AG04449 (cell line): ENCODE measurements at regions of chr11 and their contacts with region 1.

Region 1: GRCh38 chr11:19076744-19077589 is 16.4 kb upstream of the MRGPRX2 start:
- DNase-seq: no peak
- H3K4me3 ChIP-seq: no peak overlapping the region
- CTCF ChIP-seq: peak; percentile 89

Region 2: GRCh38 chr11:19087658-19088057 is 10.7 kb after region 1 on chr11:
- CTCF ChIA-PET with region 1: interaction called, 42 read pairs
- POLR2A ChIA-PET with region 1: no interaction called
- DNase-seq: peak; percentile 46
- H3K4me3 ChIP-seq: no peak overlapping the region
- CTCF ChIP-seq: no peak

Region 3: GRCh38 chr11:19093976-19094375 is 17.0 kb after region 1 on chr11:
- CTCF ChIA-PET with region 1: interaction called, 25 read pairs
- POLR2A ChIA-PET with region 1: no interaction called
- DNase-seq: peak; percentile 19
- H3K4me3 ChIP-seq: no peak overlapping the region
- CTCF ChIP-seq: no peak

Region 4: GRCh38 chr11:19116971-19117750 is 40.2 kb after region 1 on chr11 and contains the start of gene ZDHHC13:
- CTCF ChIA-PET with region 1: interaction called, 23 read pairs
- POLR2A ChIA-PET with region 1: interaction called, 3 read pairs
- DNase-seq: peak; percentile 17
- H3K4me3 ChIP-seq: peak within 1 kb of the TSS; percentile 83
- CTCF ChIP-seq: peak; percentile 58

Region 5: GRCh38 chr11:19232910-19233503 is 156.0 kb after region 1 on chr11:
- CTCF ChIA-PET with region 1: interaction called, 11 read pairs
- POLR2A ChIA-PET with region 1: no interaction called
- DNase-seq: peak; percentile 31
- H3K4me3 ChIP-seq: no peak overlapping the region
- CTCF ChIP-seq: no peak